ENCODE measurements at regions of chr5 and their contacts with region 1.

Region 1: DNA sequence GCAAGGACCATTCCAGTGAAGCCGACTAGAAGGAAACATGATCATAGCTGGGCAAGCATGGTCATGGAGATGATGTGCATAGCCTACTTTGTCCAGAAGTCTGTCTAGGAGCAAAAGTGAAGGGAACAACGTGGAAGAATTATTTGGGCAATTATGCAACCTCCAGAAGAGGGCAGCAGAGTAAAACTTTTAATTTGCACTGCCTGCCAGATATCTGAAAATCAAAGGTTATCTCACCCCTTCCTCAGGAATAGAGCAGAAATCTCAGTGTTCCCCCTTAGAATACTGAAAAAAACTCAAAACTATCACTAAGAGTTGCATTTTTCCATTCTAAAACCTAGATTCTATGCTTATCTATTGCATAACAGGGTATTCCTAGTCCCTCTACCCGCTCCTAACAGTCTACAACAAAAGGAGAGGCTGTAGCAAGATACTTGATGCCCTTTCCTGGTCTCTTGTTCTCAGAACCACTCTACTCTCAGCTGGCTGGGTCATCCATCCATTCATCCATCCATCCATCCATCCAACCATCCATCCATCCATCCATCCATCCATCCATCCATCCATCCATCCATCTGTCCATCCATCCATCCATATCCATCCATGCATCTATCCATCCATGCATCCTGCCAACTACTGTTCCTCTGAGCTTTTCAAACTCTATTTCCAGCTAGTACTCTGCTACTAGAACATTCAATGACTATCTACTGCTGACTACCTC is 8.4 kb upstream of the SETD9 start:
- DNase-seq: peak; percentile 39
- H3K4me3 ChIP-seq: no peak overlapping the region
- H3K27ac ChIP-seq: no peak overlapping the region
- H3K4me1 ChIP-seq: peaks cover 8% of the 10 kb centered on the region
- H3K27me3 ChIP-seq: no peaks in the 10 kb centered on the region
- CTCF ChIP-seq: peak; percentile 62 to 79

Region 2: DNA sequence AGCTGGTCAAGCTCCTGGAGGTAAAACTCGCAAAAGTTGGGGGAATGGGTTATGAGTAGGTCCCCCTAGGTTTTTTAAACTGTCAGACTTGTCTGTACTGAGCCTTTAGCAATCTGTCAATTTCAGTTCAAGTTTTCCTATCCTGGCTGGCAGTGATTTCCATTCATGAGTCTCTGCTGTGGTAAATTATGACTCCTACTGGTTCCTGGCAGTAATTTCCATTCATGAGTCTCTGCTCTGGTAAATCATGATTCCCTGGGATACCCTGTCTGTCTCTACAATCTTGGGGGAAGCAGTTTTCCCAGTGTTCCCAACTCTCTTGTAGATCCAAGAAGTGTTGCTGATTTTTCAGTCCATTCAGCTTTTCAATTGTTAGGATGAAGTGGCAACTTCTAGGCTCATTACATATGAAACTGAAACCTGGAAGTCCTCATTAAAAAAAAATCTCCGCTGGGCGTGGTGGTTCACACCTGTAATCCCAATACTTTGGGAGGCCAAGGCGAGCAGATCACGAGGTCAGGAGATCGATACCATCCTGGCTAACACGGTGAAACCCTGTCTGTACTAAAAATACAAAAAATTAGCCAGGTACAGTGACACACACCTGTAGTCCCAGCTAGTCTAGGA is 181.5 kb after region 1 on chr5:
- CTCF ChIA-PET with region 1: no interaction called
- dilution Hi-C with region 1: no loop called
- in situ Hi-C with region 1: no loop called
- intact Hi-C with region 1: loop called (anchors 1 kb)
- DNase-seq: peak; percentile 35
- H3K4me3 ChIP-seq: no peak overlapping the region
- H3K27ac ChIP-seq: no peak overlapping the region
- H3K4me1 ChIP-seq: no peaks in the 10 kb centered on the region
- H3K27me3 ChIP-seq: no peaks in the 10 kb centered on the region
- CTCF ChIP-seq: peak; percentile 20 to 67

Region 3: DNA sequence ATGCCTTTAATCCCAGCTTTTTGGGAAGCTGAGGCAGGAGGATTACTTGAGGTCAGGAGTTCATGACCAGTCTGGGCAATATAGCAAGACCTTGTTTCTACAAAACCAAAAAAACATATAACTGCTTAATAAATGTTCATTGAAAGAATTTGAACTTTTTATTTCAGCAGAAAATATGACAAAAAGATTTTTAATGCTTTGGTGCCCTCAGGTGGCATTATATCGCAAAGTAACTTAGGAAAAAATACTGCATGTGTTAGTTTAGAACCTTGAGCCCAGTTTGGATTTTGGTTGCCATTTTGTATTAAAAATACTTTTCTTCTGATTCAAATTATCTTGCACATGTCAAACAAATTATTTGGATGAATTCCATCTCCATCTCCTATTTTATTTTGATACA is 376.1 kb after region 1 on chr5:
- CTCF ChIA-PET with region 1: no interaction called
- dilution Hi-C with region 1: no loop called
- in situ Hi-C with region 1: no loop called
- intact Hi-C with region 1: loop called (anchors 1 kb)
- DNase-seq: no peak
- H3K4me3 ChIP-seq: no peak overlapping the region
- H3K27ac ChIP-seq: no peak overlapping the region
- H3K4me1 ChIP-seq: no peaks in the 10 kb centered on the region
- H3K27me3 ChIP-seq: no peaks in the 10 kb centered on the region
- CTCF ChIP-seq: peak; percentile 18 to 38

Measured in mammary epithelial cell (primary cell).